ENCODE measurements at regions of chr5 and their contacts with region 1.

Region 1: GRCh38 chr5:172697123-172698121 is 56.4 kb downstream of the NEURL1B start:
- DNase-seq: peak; percentile 74 to 87 (median 79)
- H3K4me3 ChIP-seq: peak overlapping the region; percentile 60
- H3K4me3 Mint-ChIP-seq: peak overlapping the region; percentile 86 to 97 (median 96)
- H3K27ac ChIP-seq: peak overlapping the region; percentile 32
- H3K27ac Mint-ChIP-seq: peak overlapping the region; percentile 70 to 100 (median 94)
- H3K4me1 ChIP-seq: peaks cover 14% of the 10 kb centered on the region
- H3K4me1 Mint-ChIP-seq: peaks cover 17 to 30% (median 22%) of the 10 kb centered on the region in 3 donors
- H3K27me3 ChIP-seq: peaks cover 5% of the 10 kb centered on the region
- H3K27me3 Mint-ChIP-seq: peaks cover 11 to 17% of the 10 kb centered on the region in 2 donors

Region 2: GRCh38 chr5:172458976-172459782 is 238.2 kb before region 1 on chr5:
- CTCF ChIA-PET with region 1: interaction called, 12 read pairs
- POLR2A ChIA-PET with region 1: no interaction called
- DNase-seq: no peak
- H3K4me3 ChIP-seq: no peak overlapping the region
- H3K4me3 Mint-ChIP-seq: no peak overlapping the region
- H3K27ac ChIP-seq: no peak overlapping the region
- H3K27ac Mint-ChIP-seq: peak overlapping the region in 2 of 8 donors; percentile 3 to 79
- H3K4me1 ChIP-seq: no peaks in the 10 kb centered on the region
- H3K4me1 Mint-ChIP-seq: peaks cover 5 to 10% (median 7%) of the 10 kb centered on the region in 3 donors
- H3K27me3 ChIP-seq: peaks cover 8% of the 10 kb centered on the region
- H3K27me3 Mint-ChIP-seq: peaks cover 19 to 52% of the 10 kb centered on the region in 2 donors

Region 3: DNA sequence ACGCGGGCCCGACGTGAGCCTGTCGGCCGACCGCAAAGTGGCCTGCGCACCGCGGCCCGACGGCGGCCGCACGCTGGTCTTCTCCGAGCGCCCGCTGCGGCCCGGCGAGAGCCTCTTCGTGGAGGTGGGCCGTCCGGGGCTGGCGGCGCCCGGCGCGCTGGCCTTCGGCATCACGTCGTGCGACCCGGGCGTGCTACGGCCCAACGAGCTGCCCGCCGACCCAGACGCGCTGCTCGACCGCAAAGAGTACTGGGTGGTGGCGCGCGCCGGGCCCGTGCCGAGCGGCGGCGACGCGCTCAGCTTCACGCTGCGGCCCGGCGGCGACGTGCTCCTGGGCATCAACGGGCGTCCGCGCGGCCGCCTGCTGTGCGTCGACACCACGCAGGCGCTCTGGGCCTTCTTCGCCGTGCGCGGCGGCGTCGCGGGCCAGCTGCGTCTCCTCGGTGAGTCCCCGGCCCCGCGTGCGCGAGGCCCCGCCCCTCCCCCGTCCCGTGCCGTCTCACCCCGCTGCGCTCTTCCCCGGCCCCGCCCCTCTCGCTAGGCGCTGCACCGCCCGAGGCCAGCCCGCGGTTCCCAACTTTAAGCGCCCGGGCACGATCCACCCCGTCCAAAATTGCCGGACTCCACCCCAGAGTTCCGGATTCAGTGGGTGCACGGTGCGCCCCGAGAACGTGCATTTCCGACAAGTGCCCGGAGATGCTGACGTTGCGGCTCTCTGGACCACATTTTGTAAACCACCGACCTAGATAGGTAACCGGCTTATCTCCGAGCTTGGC is 13.5 kb before region 1 on chr5:
- CTCF ChIA-PET with region 1: interaction called, 12 read pairs
- POLR2A ChIA-PET with region 1: interaction called, 5 read pairs
- DNase-seq: peak; percentile 58 to 76 (median 67)
- H3K4me3 ChIP-seq: peak overlapping the region; percentile 41
- H3K4me3 Mint-ChIP-seq: peak overlapping the region; percentile 68 to 83 (median 80)
- H3K27ac ChIP-seq: no peak overlapping the region
- H3K27ac Mint-ChIP-seq: peak overlapping the region; percentile 70 to 89 (median 82)
- H3K4me1 ChIP-seq: peaks cover 8% of the 10 kb centered on the region
- H3K4me1 Mint-ChIP-seq: peaks cover 14 to 18% (median 17%) of the 10 kb centered on the region in 3 donors
- H3K27me3 ChIP-seq: no peaks in the 10 kb centered on the region
- H3K27me3 Mint-ChIP-seq: peaks cover 1 to 4% of the 10 kb centered on the region in 2 donors